ENCODE measurements at regions of chr7 and their contacts with region 1.

Region 1: DNA sequence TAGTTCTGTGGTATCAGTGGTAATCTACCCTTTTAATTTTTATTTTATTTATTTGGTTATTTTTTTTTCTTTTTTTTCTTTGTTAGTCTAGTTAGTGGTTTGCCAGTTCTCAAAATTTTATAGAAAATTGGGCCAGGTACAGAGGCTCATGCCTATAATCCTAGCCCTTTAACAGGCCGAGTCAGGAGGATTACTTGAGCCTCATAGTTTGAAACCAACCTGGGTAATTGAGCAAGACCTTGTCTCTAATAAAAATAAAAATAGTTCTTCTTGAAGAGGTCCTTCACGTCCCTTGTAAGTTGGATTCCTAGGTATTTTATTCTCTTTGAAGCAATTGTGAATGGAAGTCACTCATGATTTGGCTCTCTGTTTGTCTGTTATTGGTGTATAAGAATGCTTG is 51.5 kb downstream of the PPP1R3A start:
- DNase-seq: no peak
- ATAC-seq: no peak

Region 2: DNA sequence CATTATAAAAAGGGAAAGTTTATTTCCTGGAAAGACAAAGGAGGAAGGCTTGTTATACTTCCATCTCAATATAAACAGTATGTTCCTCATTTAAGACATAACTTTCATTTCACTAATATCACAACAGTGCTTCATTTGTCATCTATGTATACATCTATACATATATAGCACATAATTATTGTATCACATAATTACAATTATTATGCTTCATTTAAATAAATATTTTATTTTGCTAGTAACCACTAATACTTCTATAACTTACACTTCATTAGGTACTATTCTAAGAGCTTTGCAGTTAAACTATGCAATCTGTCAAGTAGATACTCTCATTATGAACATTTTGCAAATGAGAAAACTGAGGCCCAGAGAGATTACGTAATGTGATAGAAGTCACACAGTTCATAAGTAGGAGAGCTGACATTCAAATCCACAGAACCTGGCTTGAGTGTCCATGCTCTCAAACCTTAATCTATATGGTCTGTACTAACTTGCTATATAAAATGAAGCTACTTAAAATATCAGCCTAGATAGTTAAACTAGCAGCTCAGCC is 35.1 kb before region 1 on chr7:
- intact Hi-C with region 1: loop called (anchors 1 kb)
- DNase-seq: no peak
- ATAC-seq: no peak

Measured in sciatic nerve (tissue), 2 donors.